ENCODE measurements at regions of chr1 and their contacts with region 1.

Region 1: GRCh38 chr1:209302779-209303568 is 280.5 kb upstream of the CAMK1G start:
- DNase-seq: no peak
- H3K4me3 ChIP-seq: no peak overlapping the region
- H3K27ac ChIP-seq: no peak overlapping the region
- H3K4me1 ChIP-seq: no peaks in the 10 kb centered on the region
- H3K27me3 ChIP-seq: peaks cover 0 to 7% of the 10 kb centered on the region in 2 donors
- CTCF ChIP-seq: no peak
- POLR2A ChIP-seq: no peak

Region 2: DNA sequence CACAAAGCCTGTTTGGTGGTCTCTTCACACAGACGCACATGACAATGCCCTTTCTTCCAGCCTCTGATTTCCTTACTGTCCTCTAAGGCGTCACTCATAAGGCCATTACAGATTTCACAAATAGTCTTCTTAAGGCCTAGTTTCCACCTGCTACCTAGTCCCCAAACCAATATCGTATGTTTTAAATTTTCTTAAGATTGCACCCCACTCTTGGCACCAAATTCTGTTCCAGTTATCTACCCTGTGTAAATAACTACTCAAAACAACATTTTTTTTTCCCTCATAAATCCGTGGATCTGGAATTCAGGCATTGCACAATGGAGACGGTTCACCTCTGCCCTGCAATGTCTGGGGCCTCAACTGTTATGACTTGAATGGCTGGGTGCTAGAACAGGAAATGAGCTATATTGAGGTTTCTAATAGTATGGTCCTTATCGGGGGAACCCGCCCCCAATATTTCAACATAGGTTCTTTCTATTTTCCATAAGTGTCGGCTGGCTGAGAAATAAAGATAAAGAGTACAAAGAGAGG is 892.7 kb after region 1 on chr1:
- intact Hi-C with region 1: loop called (anchors 10 kb)
- DNase-seq: no peak
- H3K4me3 ChIP-seq: no peak overlapping the region
- H3K27ac ChIP-seq: no peak overlapping the region
- H3K4me1 ChIP-seq: no peaks in the 10 kb centered on the region
- H3K27me3 ChIP-seq: no peaks in the 10 kb centered on the region
- CTCF ChIP-seq: no peak
- POLR2A ChIP-seq: no peak

Measured in breast epithelium (tissue), 4 donors.